ENCODE measurements at regions of chr17 and their contacts with region 1.

Region 1: GRCh38 chr17:70767102-70767701 is 597.9 kb downstream of the KCNJ2 start:
- DNase-seq: peak; percentile 29 to 43
- ATAC-seq: peak in 1 of 2 experiments; percentile 39; a peak in 1 of 6 replicates
- H3K4me3 ChIP-seq: no peak overlapping the region
- H3K27ac ChIP-seq: no peak overlapping the region
- H3K4me1 ChIP-seq: no peaks in the 10 kb centered on the region
- CTCF ChIP-seq: peak; percentile 89
- EP300 ChIP-seq: no peak
- POLR2A ChIP-seq: no peak
- RAD21 ChIP-seq: peak; percentile 86 to 93

Region 2: GRCh38 chr17:70736375-70736957 is 30.7 kb before region 1 on chr17:
- CTCF ChIA-PET with region 1: no interaction called
- POLR2A ChIA-PET with region 1: no interaction called
- DNase-seq: no peak
- ATAC-seq: no peak
- H3K4me3 ChIP-seq: no peak overlapping the region
- H3K27ac ChIP-seq: no peak overlapping the region
- H3K4me1 ChIP-seq: no peaks in the 10 kb centered on the region
- CTCF ChIP-seq: no peak
- EP300 ChIP-seq: no peak
- POLR2A ChIP-seq: no peak
- RAD21 ChIP-seq: no peak

Region 3: GRCh38 chr17:70752972-70753467 is 14.2 kb before region 1 on chr17:
- CTCF ChIA-PET with region 1: interaction called, 22 read pairs
- POLR2A ChIA-PET with region 1: no interaction called
- DNase-seq: no peak
- ATAC-seq: no peak
- H3K4me3 ChIP-seq: no peak overlapping the region
- H3K27ac ChIP-seq: no peak overlapping the region
- H3K4me1 ChIP-seq: no peaks in the 10 kb centered on the region
- CTCF ChIP-seq: no peak
- EP300 ChIP-seq: no peak
- POLR2A ChIP-seq: no peak
- RAD21 ChIP-seq: no peak

Region 4: DNA sequence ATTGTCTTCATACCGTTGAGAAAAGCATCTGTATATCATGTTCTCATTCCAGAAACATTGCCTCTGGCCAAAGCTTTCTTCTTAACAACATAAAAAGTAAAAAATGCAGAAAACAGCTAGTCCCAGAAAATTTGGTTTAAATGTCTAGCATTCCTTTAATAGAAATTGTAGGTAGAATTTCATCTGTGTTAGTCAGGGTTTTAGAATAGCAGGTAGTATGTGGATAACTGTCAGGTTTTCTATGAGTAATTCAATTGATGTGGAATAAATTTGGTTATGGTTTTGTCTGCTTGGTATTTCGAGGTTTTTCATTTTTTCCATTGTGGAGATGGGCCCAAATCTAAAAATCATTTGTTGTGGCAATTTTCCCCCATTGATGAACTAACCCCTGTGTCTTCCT is 18.9 kb after region 1 on chr17:
- CTCF ChIA-PET with region 1: interaction called, 43 read pairs
- POLR2A ChIA-PET with region 1: no interaction called
- DNase-seq: no peak
- ATAC-seq: no peak
- H3K4me3 ChIP-seq: no peak overlapping the region
- H3K27ac ChIP-seq: no peak overlapping the region
- H3K4me1 ChIP-seq: no peaks in the 10 kb centered on the region
- CTCF ChIP-seq: no peak
- EP300 ChIP-seq: no peak
- POLR2A ChIP-seq: no peak
- RAD21 ChIP-seq: no peak

Region 5: GRCh38 chr17:72104863-72105234 is 1337.6 kb after region 1 on chr17:
- CTCF ChIA-PET with region 1: interaction called, 12 read pairs
- POLR2A ChIA-PET with region 1: no interaction called
- DNase-seq: no peak
- ATAC-seq: no peak
- H3K4me3 ChIP-seq: no peak overlapping the region
- H3K27ac ChIP-seq: no peak overlapping the region
- H3K4me1 ChIP-seq: no peaks in the 10 kb centered on the region
- CTCF ChIP-seq: no peak
- EP300 ChIP-seq: no peak
- POLR2A ChIP-seq: no peak
- RAD21 ChIP-seq: no peak

Region 6: DNA sequence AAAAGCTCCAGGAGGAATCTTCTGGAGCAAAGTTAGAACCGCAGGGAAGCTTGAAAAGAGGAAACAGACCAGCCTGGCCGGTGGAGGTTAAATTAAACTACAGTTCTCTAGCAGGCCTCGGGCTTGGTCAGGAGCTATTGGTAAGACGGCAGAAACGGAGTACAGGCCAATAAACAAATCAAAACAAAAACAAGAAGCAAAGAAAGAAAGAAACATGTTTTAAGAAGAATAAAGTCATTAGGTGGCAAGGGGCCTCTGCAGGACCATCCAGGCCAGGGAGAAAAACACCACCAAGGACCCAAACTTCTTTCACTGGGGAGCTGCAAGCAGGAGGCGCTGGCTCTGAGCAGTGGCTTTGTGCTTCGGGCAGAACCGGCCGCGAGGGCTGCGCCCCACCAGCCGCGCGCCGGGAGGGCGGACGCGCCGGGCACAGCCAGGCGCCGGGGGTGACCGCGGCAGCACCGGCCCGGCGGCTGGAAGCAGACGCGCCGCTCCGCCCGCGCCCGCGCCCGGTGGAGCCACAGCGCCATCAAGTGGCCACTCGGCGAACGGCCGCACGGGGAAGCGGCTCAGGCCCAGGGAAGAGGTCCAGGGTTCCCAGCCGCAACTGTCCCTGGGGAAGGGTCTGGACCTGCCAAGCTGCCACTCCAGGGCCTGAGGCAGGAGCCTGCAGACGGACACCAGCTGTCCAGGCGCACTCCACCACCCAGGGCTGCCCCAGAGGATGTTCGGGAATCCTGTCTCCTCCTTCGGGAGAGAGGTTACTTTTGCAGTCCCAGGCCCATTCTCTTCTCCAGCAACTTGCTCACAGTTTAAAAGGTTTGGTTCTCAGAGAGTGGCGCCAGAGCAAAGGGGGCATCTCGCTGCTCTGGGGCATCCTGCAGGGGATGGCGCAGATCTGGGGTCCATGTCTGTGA is 1773.0 kb after region 1 on chr17:
- CTCF ChIA-PET with region 1: interaction called, 20 read pairs
- POLR2A ChIA-PET with region 1: no interaction called
- DNase-seq: peak; percentile 79 to 86
- ATAC-seq: peak; percentile 90 to 94
- H3K4me3 ChIP-seq: peak overlapping the region; percentile 22
- H3K27ac ChIP-seq: peak overlapping the region; percentile 82 to 87
- H3K4me1 ChIP-seq: peaks cover 25% of the 10 kb centered on the region
- CTCF ChIP-seq: peak; percentile 99
- EP300 ChIP-seq: no peak
- POLR2A ChIP-seq: no peak
- RAD21 ChIP-seq: peak; percentile 92 to 100